Activated naive CD4-positive, alpha-beta T cell treated with anti-CD3 and anti-CD28 coated beads for 36 hours (primary cell): ENCODE measurements at regions of chr6 and their contacts with region 1.

Region 1: DNA sequence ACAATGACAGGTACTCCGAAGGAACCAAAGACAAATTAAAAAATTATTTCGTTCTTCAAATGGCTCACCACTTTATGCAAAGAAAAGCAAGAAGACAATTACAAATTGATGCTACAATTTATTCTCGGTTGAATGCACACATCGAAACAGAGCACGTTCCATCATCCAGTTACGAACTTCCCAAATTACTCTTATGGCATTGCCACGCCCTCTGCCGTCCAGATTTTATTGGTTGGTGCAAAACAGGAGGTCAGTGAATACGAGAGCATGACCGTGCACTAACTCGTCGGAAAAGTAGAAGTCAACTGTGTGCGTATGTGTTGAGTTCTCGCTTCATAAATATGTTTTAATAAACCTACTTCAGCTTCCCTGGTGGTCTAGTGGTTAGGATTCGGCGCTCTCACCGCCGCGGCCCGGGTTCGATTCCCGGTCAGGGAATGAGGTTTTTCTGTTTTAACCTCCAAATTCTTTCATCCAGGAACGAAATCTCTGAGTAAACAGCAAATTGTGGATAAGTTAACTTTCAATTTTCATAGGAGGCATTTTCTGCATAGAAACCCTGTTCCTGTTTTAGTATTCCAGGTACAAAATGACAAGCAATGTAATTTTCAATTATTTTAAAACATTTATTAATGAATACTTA is 23.2 kb downstream of the ZNF311 start:
- DNase-seq: peak; percentile 78
- H3K4me3 Mint-ChIP-seq: peak overlapping the region; percentile 88
- H3K27ac Mint-ChIP-seq: peak overlapping the region; percentile 84
- H3K4me1 Mint-ChIP-seq: peaks cover 50% of the 10 kb centered on the region
- H3K27me3 Mint-ChIP-seq: peaks cover 29% of the 10 kb centered on the region

Region 2: GRCh38 chr6:28863604-28864320 is 118.2 kb before region 1 on chr6:
- CTCF ChIA-PET with region 1: interaction called, 4 read pairs
- intact Hi-C with region 1: loop called (anchors 1 kb)
- DNase-seq: peak; percentile 89
- H3K4me3 Mint-ChIP-seq: peak overlapping the region; percentile 86
- H3K27ac Mint-ChIP-seq: peak overlapping the region; percentile 92
- H3K4me1 Mint-ChIP-seq: peaks cover 33% of the 10 kb centered on the region
- H3K27me3 Mint-ChIP-seq: peaks cover 3% of the 10 kb centered on the region

Region 3: DNA sequence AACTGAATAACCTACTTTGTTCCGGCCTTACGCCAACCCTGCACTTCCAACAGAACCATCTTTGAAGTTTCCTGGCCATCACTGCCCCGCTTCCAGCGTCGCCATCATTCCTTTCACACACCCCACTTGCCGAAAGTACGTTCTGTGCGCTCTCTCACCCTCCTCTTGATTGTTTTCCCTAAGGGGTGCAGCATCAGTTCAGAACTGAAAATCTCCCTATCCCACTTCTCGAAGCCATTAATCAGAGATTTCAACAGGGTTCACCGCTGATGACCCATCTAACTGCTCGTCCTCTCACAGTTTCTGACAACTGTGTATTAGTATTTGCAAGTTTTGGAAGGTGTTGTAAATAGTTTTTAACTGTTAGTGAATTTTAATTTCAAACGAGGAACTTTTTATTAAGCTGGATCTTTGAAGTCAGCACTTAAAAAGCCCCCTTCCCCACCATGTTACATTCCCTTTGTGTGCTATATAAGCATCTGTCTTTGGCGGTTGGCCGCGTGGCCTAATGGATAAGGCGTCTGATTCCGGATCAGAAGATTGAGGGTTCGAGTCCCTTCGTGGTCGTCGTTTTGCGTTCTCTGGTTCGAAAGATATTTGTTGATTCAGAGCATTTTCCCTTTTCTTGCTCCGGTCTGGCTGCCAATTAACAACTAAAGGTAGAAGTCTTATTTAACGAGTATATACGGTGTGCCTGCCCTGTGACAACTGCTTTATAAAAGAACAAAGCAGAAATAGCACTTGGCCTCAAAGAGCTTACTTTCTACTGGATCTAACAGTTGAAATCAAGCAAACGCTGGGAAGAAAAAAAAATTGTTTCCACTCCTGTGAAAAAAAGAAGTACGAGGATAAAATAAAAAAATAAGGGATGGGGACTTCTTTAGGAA is 100.8 kb before region 1 on chr6:
- CTCF ChIA-PET with region 1: interaction called, 4 read pairs
- intact Hi-C with region 1: loop called (anchors 1 kb)
- DNase-seq: peak; percentile 86
- H3K4me3 Mint-ChIP-seq: peak overlapping the region; percentile 76
- H3K27ac Mint-ChIP-seq: peak overlapping the region; percentile 83
- H3K4me1 Mint-ChIP-seq: peaks cover 36% of the 10 kb centered on the region
- H3K27me3 Mint-ChIP-seq: peaks cover 5% of the 10 kb centered on the region

Region 4: GRCh38 chr6:28995081-28995650 is 13.2 kb after region 1 on chr6:
- CTCF ChIA-PET with region 1: no interaction called
- intact Hi-C with region 1: no loop called
- DNase-seq: no peak
- H3K4me3 Mint-ChIP-seq: no peak overlapping the region
- H3K27ac Mint-ChIP-seq: no peak overlapping the region
- H3K4me1 Mint-ChIP-seq: no peaks in the 10 kb centered on the region
- H3K27me3 Mint-ChIP-seq: peaks cover 3% of the 10 kb centered on the region

Region 5: DNA sequence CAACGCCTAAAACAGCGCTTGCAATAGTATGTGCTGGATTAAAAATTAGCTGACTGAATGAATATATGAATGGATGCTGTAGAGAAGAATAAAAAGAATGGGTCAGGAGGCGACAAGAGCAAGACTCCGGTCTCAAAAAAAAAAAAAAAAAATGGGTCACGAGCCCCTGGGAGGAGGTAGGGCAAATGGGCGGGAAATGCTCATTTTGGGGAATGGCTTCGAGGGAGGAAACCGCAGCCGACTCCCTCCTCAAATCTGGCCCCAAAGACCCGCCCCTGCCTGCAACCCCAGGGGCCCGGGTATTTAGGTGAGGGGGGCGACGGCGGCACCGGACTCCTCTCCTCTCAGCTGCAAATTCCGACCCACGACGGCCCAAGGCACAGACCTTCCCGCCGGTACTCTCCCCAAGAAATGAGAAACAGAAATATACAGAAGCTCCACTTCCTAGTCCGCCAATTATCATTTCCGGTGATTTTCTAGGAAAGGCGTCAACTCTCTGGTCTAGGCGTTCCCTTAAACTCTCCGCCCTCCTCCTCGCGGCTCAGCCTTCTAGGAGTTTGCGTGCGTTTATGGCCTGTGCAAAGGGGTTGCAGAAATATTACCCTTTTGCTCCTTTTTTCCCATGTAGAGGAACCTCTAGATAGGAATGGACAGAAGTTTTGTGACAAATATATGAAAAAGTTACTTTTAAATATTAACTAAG is 23.4 kb after region 1 on chr6 and contains the start of gene ZNF311:
- CTCF ChIA-PET with region 1: interaction called, 4 read pairs
- intact Hi-C with region 1: loop called (anchors 2 kb)
- DNase-seq: peak; percentile 72
- H3K4me3 Mint-ChIP-seq: peak within 1 kb of the TSS; percentile 85
- H3K27ac Mint-ChIP-seq: peak within 1 kb of the TSS; percentile 82
- H3K4me1 Mint-ChIP-seq: peaks cover 15% of the 10 kb centered on the region
- H3K27me3 Mint-ChIP-seq: no peaks in the 10 kb centered on the region
- total RNA-seq, gene ZNF311: 0.57 to 0.69 TPM